Esophagus muscularis mucosa (tissue), 4 donors: ENCODE measurements at regions of chr5 and their contacts with region 1.

Region 1: DNA sequence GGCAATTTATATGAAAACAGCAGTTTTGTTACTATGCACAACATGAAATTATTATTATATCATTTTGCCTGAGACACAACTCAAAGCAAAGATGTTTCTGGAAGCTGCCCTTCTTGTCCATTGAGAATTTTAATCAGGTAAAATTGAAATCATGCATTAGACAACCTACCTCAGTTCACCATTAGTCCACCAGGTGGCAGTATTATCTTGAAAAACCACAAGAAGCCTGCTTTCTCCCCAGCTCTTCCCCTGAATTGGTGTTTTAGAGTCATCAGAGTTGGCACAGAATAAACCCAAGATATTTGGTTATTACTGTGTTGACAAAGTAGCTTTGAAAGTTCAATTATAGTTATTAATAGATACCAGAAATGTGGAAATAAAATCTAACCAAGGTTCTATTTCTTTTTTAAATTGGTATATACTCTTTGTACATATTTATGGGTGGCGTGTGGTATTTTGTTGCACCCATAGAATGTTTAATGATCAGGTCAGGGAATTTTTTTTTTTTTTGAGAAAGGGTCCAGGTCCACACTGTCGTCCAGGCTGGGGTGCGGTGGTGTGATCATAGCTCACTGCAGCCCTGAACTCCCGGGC is 25.7 kb downstream of the UTP15 start:
- DNase-seq: no peak
- H3K4me3 ChIP-seq: no peak overlapping the region
- H3K27ac ChIP-seq: no peak overlapping the region
- H3K4me1 ChIP-seq: peaks cover 0 to 7% (median 6%) of the 10 kb centered on the region in 4 donors
- H3K27me3 ChIP-seq: no peaks in the 10 kb centered on the region
- CTCF ChIP-seq: peak; percentile 84 to 94 (median 91)
- EP300 ChIP-seq: no peak
- POLR2A ChIP-seq: no peak

Region 2: DNA sequence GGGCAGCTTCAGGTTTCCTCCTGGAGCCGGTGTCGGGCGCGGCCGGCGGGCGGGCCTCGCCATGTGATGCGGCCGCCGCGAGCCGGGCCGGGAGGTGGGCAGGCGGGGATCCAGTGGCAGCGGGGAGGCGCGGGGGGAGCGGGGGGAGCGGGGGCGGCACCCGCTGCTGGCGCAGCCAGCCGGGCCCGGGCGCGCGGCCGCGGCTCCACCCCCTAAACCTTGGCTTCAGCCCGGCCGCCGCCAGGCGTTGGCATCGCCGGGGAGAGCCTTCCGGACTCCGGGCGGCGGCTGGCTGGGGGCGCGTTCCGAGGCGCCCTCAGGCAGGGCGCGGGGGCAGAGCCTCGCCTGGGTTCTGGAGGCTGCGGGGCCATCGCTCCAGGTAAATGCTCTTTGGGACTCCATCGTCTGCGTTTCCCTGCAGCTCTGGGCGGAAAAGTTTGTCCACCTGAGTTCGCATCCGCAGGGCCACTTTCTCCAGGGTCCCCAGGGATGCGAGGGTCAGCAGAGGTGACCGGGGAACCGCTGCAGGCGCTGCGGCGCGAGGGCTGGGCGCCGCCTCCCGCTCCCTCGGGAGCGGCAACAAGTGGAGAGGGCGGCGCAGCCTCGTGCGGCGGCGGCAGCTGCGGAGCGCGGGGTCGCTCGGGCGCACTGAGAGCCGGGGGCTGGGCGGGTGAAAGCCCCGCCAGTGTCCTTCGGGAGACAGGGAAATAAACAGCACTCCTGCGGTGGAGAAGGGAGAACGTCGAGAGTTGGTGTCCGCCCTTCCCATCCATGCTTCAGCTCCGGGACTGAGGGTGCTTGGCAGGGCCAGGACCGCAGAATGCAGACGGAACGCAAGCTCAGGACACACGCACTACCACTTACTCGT is 35.0 kb after region 1 on chr5 and contains the start of gene ARHGEF28:
- intact Hi-C with region 1: loop called (anchors 5 kb)
- DNase-seq: no peak
- H3K4me3 ChIP-seq: peak within 1 kb of the TSS; percentile 76 to 85 (median 80)
- H3K27ac ChIP-seq: peak within 1 kb of the TSS; percentile 83 to 90 (median 86)
- H3K4me1 ChIP-seq: peaks cover 7 to 27% (median 25%) of the 10 kb centered on the region in 4 donors
- H3K27me3 ChIP-seq: no peaks in the 10 kb centered on the region
- CTCF ChIP-seq: no peak
- EP300 ChIP-seq: no peak
- POLR2A ChIP-seq: no peak
- total RNA-seq, gene ARHGEF28: 12.7 to 31.2 (median 19.2) TPM

Region 3: DNA sequence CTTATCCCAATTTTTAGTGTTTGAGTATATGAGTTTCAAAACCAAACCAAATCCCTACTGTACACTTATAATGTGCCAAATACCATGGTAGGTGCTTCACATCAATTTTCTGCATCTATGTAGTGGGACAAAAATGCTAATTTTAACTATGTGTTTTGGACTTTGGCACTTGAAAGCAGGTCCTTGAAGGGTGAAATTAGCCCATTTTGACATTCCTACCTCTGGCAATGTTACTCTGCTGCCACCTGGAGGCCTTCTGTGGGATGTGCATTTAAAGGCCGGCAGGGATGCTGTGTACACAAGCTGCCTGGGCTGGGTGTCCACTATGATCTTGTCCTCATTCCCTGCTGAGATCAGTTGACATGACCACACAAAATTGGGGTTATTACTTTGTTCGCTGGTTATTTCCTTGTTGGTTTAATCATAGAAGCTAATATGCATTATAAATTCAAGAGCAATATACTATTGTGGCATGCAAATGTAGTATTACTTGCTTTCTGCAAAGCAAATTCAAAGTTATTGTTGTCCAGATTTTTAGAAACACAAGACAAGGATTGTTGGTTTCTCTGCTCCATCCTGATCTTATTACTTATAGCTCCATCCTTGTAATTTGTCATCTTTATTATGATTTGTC is 201.6 kb after region 1 on chr5:
- intact Hi-C with region 1: loop called (anchors 1 kb)
- DNase-seq: peak; percentile 93
- H3K4me3 ChIP-seq: no peak overlapping the region
- H3K27ac ChIP-seq: no peak overlapping the region
- H3K4me1 ChIP-seq: peaks cover 8 to 30% (median 18%) of the 10 kb centered on the region in 4 donors
- H3K27me3 ChIP-seq: no peaks in the 10 kb centered on the region
- CTCF ChIP-seq: peak; percentile 93 to 99 (median 98)
- EP300 ChIP-seq: no peak
- POLR2A ChIP-seq: no peak